ENCODE measurements at regions of chr6 and their contacts with region 1.

Region 1: GRCh38 chr6:149316798-149317655 is 485 bp upstream of the TAB2 start:
- DNase-seq: peak; percentile 77 to 96 (median 87)
- ATAC-seq: peak; percentile 70
- H3K4me3 ChIP-seq: peak overlapping the region; percentile 71 to 78
- H3K4me3 Mint-ChIP-seq: peak overlapping the region; percentile 89
- H3K27ac ChIP-seq: peak overlapping the region; percentile 75 to 87
- H3K27ac Mint-ChIP-seq: peak overlapping the region; percentile 88
- H3K4me1 ChIP-seq: peaks cover 32% of the 10 kb centered on the region
- H3K4me1 Mint-ChIP-seq: peaks cover 39% of the 10 kb centered on the region
- H3K27me3 ChIP-seq: no peaks in the 10 kb centered on the region
- H3K27me3 Mint-ChIP-seq: no peaks in the 10 kb centered on the region
- CTCF ChIP-seq: no peak

Region 2: GRCh38 chr6:149028767-149029405 is 288.1 kb before region 1 on chr6:
- CTCF ChIA-PET with region 1: interaction called, 5 read pairs
- POLR2A ChIA-PET with region 1: no interaction called
- intact Hi-C with region 1: loop called in 1 of 2 experiments (anchors 5 kb)
- DNase-seq: peak; percentile 16 to 88 (median 68)
- ATAC-seq: peak; percentile 70
- H3K4me3 ChIP-seq: no peak overlapping the region
- H3K4me3 Mint-ChIP-seq: no peak overlapping the region
- H3K27ac ChIP-seq: no peak overlapping the region
- H3K27ac Mint-ChIP-seq: no peak overlapping the region
- H3K4me1 ChIP-seq: no peaks in the 10 kb centered on the region
- H3K4me1 Mint-ChIP-seq: peaks cover 25% of the 10 kb centered on the region
- H3K27me3 ChIP-seq: no peaks in the 10 kb centered on the region
- H3K27me3 Mint-ChIP-seq: no peaks in the 10 kb centered on the region
- CTCF ChIP-seq: peak; percentile 91

Region 3: GRCh38 chr6:149233056-149233715 is 83.8 kb before region 1 on chr6:
- CTCF ChIA-PET with region 1: no interaction called
- POLR2A ChIA-PET with region 1: no interaction called
- intact Hi-C with region 1: loop called (anchors 1 to 5 kb)
- DNase-seq: peak in 7 of 9 experiments; percentile 26 to 65 (median 47)
- ATAC-seq: peak; percentile 54
- H3K4me3 ChIP-seq: peak overlapping the region in 1 of 2 experiments; percentile 17
- H3K4me3 Mint-ChIP-seq: peak overlapping the region; percentile 38
- H3K27ac ChIP-seq: peak overlapping the region; percentile 31 to 45
- H3K27ac Mint-ChIP-seq: peak overlapping the region; percentile 93
- H3K4me1 ChIP-seq: peaks cover 41% of the 10 kb centered on the region
- H3K4me1 Mint-ChIP-seq: peaks cover 43% of the 10 kb centered on the region
- H3K27me3 ChIP-seq: no peaks in the 10 kb centered on the region
- H3K27me3 Mint-ChIP-seq: no peaks in the 10 kb centered on the region
- CTCF ChIP-seq: no peak

Region 4: GRCh38 chr6:149306967-149307366 is 10.1 kb before region 1 on chr6:
- CTCF ChIA-PET with region 1: no interaction called
- POLR2A ChIA-PET with region 1: no interaction called
- intact Hi-C with region 1: no loop called
- DNase-seq: no peak
- ATAC-seq: no peak
- H3K4me3 ChIP-seq: no peak overlapping the region
- H3K4me3 Mint-ChIP-seq: no peak overlapping the region
- H3K27ac ChIP-seq: no peak overlapping the region
- H3K27ac Mint-ChIP-seq: no peak overlapping the region
- H3K4me1 ChIP-seq: no peaks in the 10 kb centered on the region
- H3K4me1 Mint-ChIP-seq: no peaks in the 10 kb centered on the region
- H3K27me3 ChIP-seq: no peaks in the 10 kb centered on the region
- H3K27me3 Mint-ChIP-seq: no peaks in the 10 kb centered on the region
- CTCF ChIP-seq: no peak

Region 5: GRCh38 chr6:149354009-149354408 is 37.0 kb after region 1 on chr6:
- CTCF ChIA-PET with region 1: no interaction called
- POLR2A ChIA-PET with region 1: no interaction called
- intact Hi-C with region 1: loop called in 1 of 2 experiments (anchors 5 kb)
- DNase-seq: no peak
- ATAC-seq: peak; percentile 34
- H3K4me3 ChIP-seq: no peak overlapping the region
- H3K4me3 Mint-ChIP-seq: no peak overlapping the region
- H3K27ac ChIP-seq: no peak overlapping the region
- H3K27ac Mint-ChIP-seq: no peak overlapping the region
- H3K4me1 ChIP-seq: peaks cover 34% of the 10 kb centered on the region
- H3K4me1 Mint-ChIP-seq: peaks cover 72% of the 10 kb centered on the region
- H3K27me3 ChIP-seq: no peaks in the 10 kb centered on the region
- H3K27me3 Mint-ChIP-seq: no peaks in the 10 kb centered on the region
- CTCF ChIP-seq: no peak

Region 6: DNA sequence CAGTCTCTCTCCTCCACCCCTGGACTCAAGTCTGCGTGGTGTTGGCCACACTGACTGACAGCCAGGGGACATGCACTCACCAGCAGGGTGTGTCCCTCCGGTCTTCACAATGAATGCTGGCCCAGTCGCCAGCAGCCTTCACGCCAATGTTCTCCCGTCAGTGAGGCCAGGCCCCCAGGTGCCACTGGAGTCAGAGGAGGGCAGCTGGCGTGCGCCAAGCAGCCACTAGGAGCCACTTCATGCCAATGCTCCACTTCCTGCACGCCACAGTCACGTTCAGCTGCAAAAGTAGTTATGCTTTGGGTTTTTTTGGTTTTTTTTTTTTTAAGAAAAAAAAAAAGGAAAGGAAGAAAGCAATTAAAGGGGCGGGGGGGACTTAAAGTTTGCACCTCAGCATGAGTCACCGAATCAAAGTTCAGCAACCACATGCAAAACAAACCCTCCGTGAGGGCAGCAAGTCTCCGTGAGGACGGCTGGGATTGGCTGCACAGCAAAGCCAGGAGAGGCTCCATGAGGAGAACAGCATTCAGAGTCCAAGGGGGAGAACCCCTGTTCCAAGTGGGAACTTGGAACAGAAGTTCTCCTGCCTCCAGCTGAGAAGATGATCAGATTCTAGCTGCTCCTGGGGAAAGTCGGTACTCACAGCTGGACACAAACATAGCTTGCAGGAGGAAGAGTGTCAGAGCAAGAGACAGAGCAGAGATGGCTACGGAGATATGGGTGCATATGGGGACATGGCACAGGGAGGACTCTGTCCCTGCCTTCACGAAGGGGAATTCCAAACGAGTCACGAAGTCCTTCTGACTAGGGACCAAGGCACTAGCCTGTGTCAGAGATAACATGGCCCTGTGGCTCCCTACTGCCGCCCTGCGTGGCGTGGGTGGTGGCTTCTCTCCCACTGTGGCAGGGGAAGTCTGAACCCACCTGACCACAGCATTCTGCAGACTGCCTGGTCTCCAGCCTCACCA is 168.0 kb after region 1 on chr6 and contains the start of gene ZC3H12D:
- CTCF ChIA-PET with region 1: no interaction called
- POLR2A ChIA-PET with region 1: no interaction called
- intact Hi-C with region 1: loop called in 1 of 2 experiments (anchors 5 kb)
- DNase-seq: peak; percentile 65 to 93 (median 82)
- ATAC-seq: peak; percentile 80
- H3K4me3 ChIP-seq: peak within 1 kb of the TSS; percentile 45 to 55
- H3K4me3 Mint-ChIP-seq: peak within 1 kb of the TSS; percentile 86
- H3K27ac ChIP-seq: peak within 1 kb of the TSS; percentile 69 to 92
- H3K27ac Mint-ChIP-seq: peak within 1 kb of the TSS; percentile 95
- H3K4me1 ChIP-seq: peaks cover 43% of the 10 kb centered on the region
- H3K4me1 Mint-ChIP-seq: peaks cover 63% of the 10 kb centered on the region
- H3K27me3 ChIP-seq: no peaks in the 10 kb centered on the region
- H3K27me3 Mint-ChIP-seq: no peaks in the 10 kb centered on the region
- CTCF ChIP-seq: peak; percentile 66
- total RNA-seq, gene ZC3H12D: 45.9 to 50.0 TPM

Measured in CD8-positive, alpha-beta T cell (primary cell).